ENCODE measurements at regions of chr12 and their contacts with region 1.

Region 1: GRCh38 chr12:51083126-51083833 is at the start of gene CSRNP2:
- H3K4me3 Mint-ChIP-seq: peak within 1 kb of the TSS; percentile 100
- H3K27ac Mint-ChIP-seq: peak within 1 kb of the TSS; percentile 96
- H3K4me1 Mint-ChIP-seq: peaks cover 37% of the 10 kb centered on the region
- H3K27me3 Mint-ChIP-seq: no peaks in the 10 kb centered on the region

Region 2: GRCh38 chr12:51047655-51048540 is 35.4 kb before region 1 on chr12 and contains the start of gene LETMD1:
- intact Hi-C with region 1: loop called (anchors 1 kb)
- H3K4me3 Mint-ChIP-seq: peak within 1 kb of the TSS; percentile 98
- H3K27ac Mint-ChIP-seq: peak within 1 kb of the TSS; percentile 90
- H3K4me1 Mint-ChIP-seq: peaks cover 18% of the 10 kb centered on the region
- H3K27me3 Mint-ChIP-seq: no peaks in the 10 kb centered on the region

Region 3: GRCh38 chr12:51246254-51246853 is 163.1 kb after region 1 on chr12:
- intact Hi-C with region 1: loop called (anchors 10 kb)
- H3K4me3 Mint-ChIP-seq: peak overlapping the region; percentile 41
- H3K27ac Mint-ChIP-seq: peak overlapping the region; percentile 78
- H3K4me1 Mint-ChIP-seq: peaks cover 65% of the 10 kb centered on the region
- H3K27me3 Mint-ChIP-seq: peaks cover 25% of the 10 kb centered on the region

Measured in dendritic cell treated with granulocyte-macrophage colony-stimulating factor and Interleukin-4, amounts not matched to agents 40 ng/mL and 50 ng/mL, for 4 days (primary cell).